K562 (cell line): ENCODE measurements at regions of chr19 and their contacts with region 1.

Region 1: DNA sequence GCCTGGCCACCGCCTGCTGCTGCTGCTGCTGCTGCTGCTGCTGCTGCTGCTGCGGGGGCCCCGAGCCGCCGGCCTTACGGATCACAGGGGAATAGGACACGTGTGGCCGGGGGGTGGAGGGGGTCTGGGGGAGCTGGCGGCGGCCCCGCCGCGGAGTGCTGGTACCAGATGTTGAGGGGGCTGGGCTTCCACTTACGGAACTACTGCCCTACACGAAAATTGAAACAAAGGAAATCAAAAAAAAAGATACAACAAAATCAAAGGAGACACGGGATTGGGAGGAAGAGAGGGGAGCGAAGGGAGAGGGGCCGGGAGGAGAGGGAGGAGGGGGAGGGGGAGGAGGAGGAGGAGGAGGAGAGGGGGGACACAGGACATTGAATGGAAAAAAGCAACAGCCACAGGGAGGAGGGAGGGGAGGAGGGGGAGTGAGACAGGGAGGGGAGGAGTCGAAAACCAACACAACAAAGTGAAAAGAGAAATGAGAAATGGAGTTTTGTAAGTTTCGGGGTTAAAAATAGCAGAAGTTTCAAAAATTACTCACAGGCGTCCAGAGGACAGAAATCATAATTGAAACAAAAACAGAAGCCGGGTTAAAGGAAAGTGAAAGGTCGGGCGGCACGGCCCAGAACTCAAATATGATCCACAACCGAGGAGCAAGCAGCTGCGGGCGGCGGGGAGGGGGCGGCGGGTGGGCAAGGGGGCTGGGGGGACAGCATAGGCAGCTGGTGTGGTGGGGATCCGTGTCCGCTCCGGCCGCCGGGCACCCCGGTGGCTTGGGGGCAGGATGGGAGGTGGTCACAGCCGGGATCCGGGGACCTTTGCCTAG is 57.8 kb downstream of the IER2 start:
- DNase-seq: no peak
- ATAC-seq: no peak
- H3K4me3 ChIP-seq: no peak overlapping the region
- H3K27ac ChIP-seq: no peak overlapping the region
- H3K4me1 ChIP-seq: peaks cover 0 to 52% of the 10 kb centered on the region in 2 experiments; a peak in 2 of 5 replicates
- H3K27me3 ChIP-seq: peaks cover 0 to 7% of the 10 kb centered on the region in 2 experiments; a peak in 2 of 5 replicates
- CTCF ChIP-seq: no peak
- EP300 ChIP-seq: no peak
- POLR2A ChIP-seq: no peak
- RAD21 ChIP-seq: no peak

Region 2: GRCh38 chr19:13252569-13253335 is 44.7 kb after region 1 on chr19:
- CTCF ChIA-PET with region 1: no interaction called
- POLR2A ChIA-PET with region 1: interaction called, 3 read pairs
- in situ Hi-C with region 1: loop called (anchors 5 kb)
- intact Hi-C with region 1: no loop called
- DNase-seq: no peak
- ATAC-seq: no peak
- H3K4me3 ChIP-seq: no peak overlapping the region
- H3K27ac ChIP-seq: no peak overlapping the region
- H3K4me1 ChIP-seq: peaks cover 0 to 3% of the 10 kb centered on the region in 2 experiments; a peak in 1 of 5 replicates
- H3K27me3 ChIP-seq: peaks cover 16 to 46% of the 10 kb centered on the region in 2 experiments
- CTCF ChIP-seq: no peak
- EP300 ChIP-seq: no peak
- POLR2A ChIP-seq: no peak
- RAD21 ChIP-seq: no peak